ENCODE measurements at regions of chr22 and their contacts with region 1.

Region 1: DNA sequence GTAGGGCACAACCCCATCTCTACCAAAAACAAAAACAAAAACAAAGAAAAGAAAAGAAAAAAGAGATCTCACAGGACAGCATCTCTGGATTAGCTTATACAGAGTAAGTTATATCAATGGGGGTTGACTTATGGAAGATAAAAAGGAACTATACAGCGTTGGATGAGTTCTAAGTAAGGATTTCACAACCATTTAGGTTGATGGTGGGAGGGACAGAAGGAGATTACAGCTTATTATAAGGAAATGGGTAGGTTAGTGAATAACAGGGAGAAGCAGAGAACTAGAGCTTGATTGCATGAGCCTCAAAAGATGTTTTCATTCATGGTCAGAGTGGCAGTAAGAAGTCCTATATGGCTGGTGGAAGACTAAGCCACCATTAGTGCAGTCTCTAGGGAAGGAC is 60.3 kb downstream of the CECR2 start:
- DNase-seq: no peak
- ATAC-seq: no peak
- H3K4me3 ChIP-seq: no peak overlapping the region
- H3K27ac ChIP-seq: no peak overlapping the region
- H3K4me1 ChIP-seq: peaks cover 2% of the 10 kb centered on the region
- H3K27me3 ChIP-seq: no peaks in the 10 kb centered on the region

Region 2: GRCh38 chr22:17477391-17477833 is 47.9 kb after region 1 on chr22:
- intact Hi-C with region 1: loop called in 1 of 4 experiments (anchors 5 kb)
- DNase-seq: peak; percentile 61 to 72 (median 66)
- ATAC-seq: peak; percentile 91 to 95
- H3K4me3 ChIP-seq: peak overlapping the region; percentile 41
- H3K27ac ChIP-seq: peak overlapping the region; percentile 7
- H3K4me1 ChIP-seq: peaks cover 3% of the 10 kb centered on the region
- H3K27me3 ChIP-seq: no peaks in the 10 kb centered on the region